Pancreas (tissue), 10 donors: ENCODE measurements at regions of chr2 and their contacts with region 1.

Region 1: DNA sequence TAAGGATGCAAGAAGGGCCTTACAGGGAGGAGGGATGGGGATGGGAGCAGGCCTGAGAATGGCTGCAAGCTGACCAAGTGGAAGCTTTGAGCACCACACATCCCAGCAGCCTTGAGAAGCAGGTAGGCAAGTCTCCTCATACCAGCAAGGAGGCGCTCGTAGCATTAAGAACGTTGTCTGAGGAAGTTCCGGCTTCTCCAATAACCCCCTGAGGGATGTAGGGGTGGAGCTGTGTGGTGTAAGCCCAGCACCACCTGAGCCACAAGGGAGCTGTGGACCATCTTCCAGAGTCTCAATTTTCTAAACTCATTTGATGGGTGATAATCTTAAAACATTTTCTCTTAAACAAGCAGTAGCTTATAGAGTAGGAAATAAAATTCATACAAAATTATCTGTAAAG is 50.6 kb downstream of the ST3GAL5 start:
- DNase-seq: peak in 1 of 6 donors; percentile 2
- ATAC-seq: no peak
- H3K4me3 ChIP-seq: no peak overlapping the region
- H3K27ac ChIP-seq: no peak overlapping the region
- H3K4me1 ChIP-seq: no peaks in the 10 kb centered on the region
- H3K27me3 ChIP-seq: no peaks in the 10 kb centered on the region
- CTCF ChIP-seq: no peak

Region 2: GRCh38 chr2:85704800-85705679 is 133.1 kb before region 1 on chr2:
- intact Hi-C with region 1: no loop called
- DNase-seq: no peak
- ATAC-seq: no peak
- H3K4me3 ChIP-seq: no peak overlapping the region
- H3K27ac ChIP-seq: peak overlapping the region in 2 of 4 donors; percentile 46 to 59
- H3K4me1 ChIP-seq: peaks cover 0 to 11% (median 0%) of the 10 kb centered on the region in 3 donors
- H3K27me3 ChIP-seq: no peaks in the 10 kb centered on the region
- CTCF ChIP-seq: no peak

Region 3: GRCh38 chr2:86068136-86068588 is 230.0 kb after region 1 on chr2:
- intact Hi-C with region 1: loop called in 1 of 3 experiments (anchors 5 kb)
- DNase-seq: no peak
- ATAC-seq: peak in 2 of 4 donors; percentile 5 to 17
- H3K4me3 ChIP-seq: no peak overlapping the region
- H3K27ac ChIP-seq: no peak overlapping the region
- H3K4me1 ChIP-seq: peaks cover 12 to 21% (median 15%) of the 10 kb centered on the region in 3 donors
- H3K27me3 ChIP-seq: no peaks in the 10 kb centered on the region
- CTCF ChIP-seq: no peak